Stomach (tissue), 19 donors: ENCODE measurements at regions of chr6 and their contacts with region 1.

Region 1: DNA sequence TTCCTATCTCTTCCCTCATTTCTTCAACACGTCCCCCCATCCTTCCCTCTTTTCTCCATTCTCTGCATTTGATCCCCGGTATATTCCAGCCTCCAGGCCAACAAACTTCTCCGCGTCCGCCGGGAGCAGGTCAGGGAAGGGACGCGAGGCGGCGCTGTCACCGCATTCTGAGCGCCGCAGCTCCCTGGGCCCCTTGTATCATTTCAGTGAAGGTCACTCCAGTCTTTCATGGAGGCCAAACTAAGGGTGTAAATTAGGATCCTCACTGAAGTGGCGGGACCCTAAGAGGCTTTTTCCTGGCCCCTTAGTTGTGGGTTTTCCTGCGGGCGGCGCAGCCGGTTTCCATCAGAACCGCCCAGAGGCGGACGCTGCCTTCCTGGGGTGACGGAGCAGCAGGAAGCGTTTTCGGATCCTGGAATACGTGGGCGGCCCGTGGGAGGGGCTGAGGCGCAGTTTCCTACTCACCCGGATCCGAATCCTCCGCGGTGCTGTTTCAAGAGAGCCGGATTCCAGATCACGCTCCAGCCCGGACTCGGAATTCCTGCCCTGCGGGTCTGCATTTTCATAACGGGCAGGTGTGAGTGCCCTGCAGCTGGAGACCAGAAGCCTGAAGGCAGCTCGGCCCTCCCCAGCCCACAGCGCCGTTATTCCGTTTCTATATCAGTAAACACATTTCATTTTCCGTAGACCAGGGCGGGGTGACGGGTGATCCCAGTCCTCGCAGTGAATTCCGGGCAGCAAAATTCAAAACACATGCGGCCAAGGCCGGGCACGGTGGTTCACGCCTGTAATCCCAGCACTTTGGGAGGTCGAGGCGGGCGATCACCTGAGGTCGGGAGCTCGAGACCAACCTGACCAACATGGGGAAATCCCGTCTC is 3.6 kb upstream of the MICA start:
- DNase-seq: peak; percentile 91 to 96
- H3K4me3 ChIP-seq: peak overlapping the region; percentile 64 to 83 (median 78)
- H3K27ac ChIP-seq: peak overlapping the region; percentile 97 to 100 (median 99)
- H3K4me1 ChIP-seq: peaks cover 24 to 75% (median 55%) of the 10 kb centered on the region in 4 donors
- H3K27me3 ChIP-seq: no peaks in the 10 kb centered on the region
- CTCF ChIP-seq: peak in 5 of 7 experiments; percentile 79 to 97 (median 90)
- EP300 ChIP-seq: no peak
- POLR2A ChIP-seq: no peak

Region 2: DNA sequence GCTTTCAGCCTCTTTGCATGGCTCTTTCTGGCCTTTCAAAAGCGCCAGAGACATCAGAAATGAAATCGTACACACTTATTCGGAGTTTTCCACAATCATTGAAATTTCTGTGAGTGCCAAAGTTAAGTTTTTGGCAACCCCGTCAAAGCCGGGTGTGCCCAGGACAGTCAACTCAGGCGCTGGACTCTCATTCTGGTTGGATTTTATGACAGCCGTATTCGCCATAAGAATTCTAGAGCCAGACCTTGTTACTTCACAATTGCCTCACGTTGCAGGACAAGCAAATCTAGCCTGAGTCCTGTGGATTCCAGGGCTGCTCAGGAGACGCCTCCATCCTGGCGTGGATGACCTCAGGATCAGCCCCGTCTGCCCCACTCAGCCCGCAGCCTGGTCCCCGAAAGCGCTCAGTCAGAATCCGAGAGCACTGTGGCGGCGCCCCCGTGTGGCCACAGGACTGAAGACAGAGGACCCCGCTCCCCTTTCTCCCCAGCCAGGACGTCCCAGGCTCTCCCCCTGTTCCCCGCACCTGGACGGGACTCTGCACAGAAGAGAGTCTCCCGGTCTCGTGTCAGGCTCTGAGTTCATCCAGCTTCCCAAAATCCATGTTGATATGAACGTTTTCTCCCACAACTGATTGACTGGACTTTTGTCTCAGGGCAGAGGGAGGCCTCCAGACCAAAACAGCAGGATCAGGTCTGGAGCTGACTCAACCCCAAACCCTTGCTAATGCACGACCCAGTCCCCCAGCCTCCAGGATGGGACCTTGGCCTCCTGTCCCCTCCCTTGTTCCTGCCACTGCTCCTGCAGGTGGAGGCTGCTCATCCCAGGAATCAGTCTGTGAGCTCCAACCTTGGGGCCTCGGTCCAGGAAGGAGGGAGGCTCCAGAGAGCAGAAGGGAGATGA is 41.8 kb after region 1 on chr6:
- intact Hi-C with region 1: loop called (anchors 5 kb)
- DNase-seq: peak; percentile 87 to 89
- H3K4me3 ChIP-seq: peak overlapping the region in 1 of 4 donors; percentile 7
- H3K27ac ChIP-seq: no peak overlapping the region
- H3K4me1 ChIP-seq: peaks cover 0 to 10% (median 4%) of the 10 kb centered on the region in 4 donors
- H3K27me3 ChIP-seq: no peaks in the 10 kb centered on the region
- CTCF ChIP-seq: peak in 5 of 7 experiments; percentile 67 to 89 (median 74)
- EP300 ChIP-seq: no peak
- POLR2A ChIP-seq: no peak